Activated naive CD4-positive, alpha-beta T cell treated with anti-CD3 and anti-CD28 coated beads for 36 hours (primary cell): ENCODE measurements at regions of chr1 and their contacts with region 1.

Region 1: GRCh38 chr1:116377541-116378529 is 4.8 kb downstream of the ATP1A1 start:
- DNase-seq: peak; percentile 47
- H3K4me3 Mint-ChIP-seq: peak overlapping the region; percentile 72
- H3K27ac Mint-ChIP-seq: peak overlapping the region; percentile 95
- H3K4me1 Mint-ChIP-seq: peaks cover 64% of the 10 kb centered on the region
- H3K27me3 Mint-ChIP-seq: no peaks in the 10 kb centered on the region

Region 2: DNA sequence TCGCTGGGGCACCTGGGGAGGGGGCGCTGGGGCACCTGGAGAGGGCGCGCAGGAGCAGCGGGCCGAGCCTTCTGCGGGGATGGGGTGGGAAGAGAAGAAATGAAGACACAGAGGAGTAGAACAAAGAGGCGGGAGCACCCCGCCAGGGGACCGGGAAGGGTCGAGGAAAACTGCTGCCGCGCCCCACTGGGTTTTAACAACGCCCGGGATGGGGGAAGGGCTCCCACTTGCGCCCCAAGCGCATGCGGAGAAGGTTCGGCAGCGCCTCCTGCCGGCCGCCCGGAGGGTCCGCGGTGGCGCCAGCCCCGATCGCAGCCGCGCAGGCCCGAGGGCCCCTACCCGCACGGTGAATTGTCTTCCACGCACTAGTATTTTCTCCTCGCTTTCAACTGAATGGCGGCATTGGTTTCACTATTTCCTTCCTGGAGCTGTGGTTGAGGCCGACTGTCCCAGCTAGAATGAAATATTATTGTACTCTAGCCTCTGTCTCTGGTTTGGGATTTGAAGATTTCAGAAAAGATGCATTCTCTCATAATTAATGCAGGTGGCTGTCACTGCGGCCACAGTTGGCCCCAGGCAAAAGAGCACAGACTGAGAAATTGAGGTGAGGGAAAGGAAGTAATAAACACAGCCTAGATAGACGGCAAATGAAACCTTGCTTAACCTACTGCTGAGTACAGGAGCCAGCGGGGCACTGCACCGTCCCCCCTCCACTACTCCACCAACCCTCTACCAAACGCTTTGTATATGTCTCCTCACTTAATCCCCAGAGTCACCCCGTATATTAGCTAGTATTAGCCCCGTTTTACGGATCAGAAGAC is 209.3 kb before region 1 on chr1:
- CTCF ChIA-PET with region 1: no interaction called
- intact Hi-C with region 1: loop called (anchors 2 kb)
- DNase-seq: peak; percentile 88
- H3K4me3 Mint-ChIP-seq: peak overlapping the region; percentile 74
- H3K27ac Mint-ChIP-seq: no peak overlapping the region
- H3K4me1 Mint-ChIP-seq: peaks cover 8% of the 10 kb centered on the region
- H3K27me3 Mint-ChIP-seq: no peaks in the 10 kb centered on the region

Region 3: GRCh38 chr1:116418091-116418830 is 40.4 kb after region 1 on chr1:
- CTCF ChIA-PET with region 1: interaction called, 3 read pairs
- intact Hi-C with region 1: loop called (anchors 1 kb)
- DNase-seq: peak; percentile 88
- H3K4me3 Mint-ChIP-seq: peak overlapping the region; percentile 87
- H3K27ac Mint-ChIP-seq: peak overlapping the region; percentile 78
- H3K4me1 Mint-ChIP-seq: peaks cover 32% of the 10 kb centered on the region
- H3K27me3 Mint-ChIP-seq: no peaks in the 10 kb centered on the region

Region 4: GRCh38 chr1:116556289-116557006 is 178.6 kb after region 1 on chr1:
- CTCF ChIA-PET with region 1: no interaction called
- intact Hi-C with region 1: loop called (anchors 1 kb)
- DNase-seq: peak; percentile 82
- H3K4me3 Mint-ChIP-seq: no peak overlapping the region
- H3K27ac Mint-ChIP-seq: peak overlapping the region; percentile 78
- H3K4me1 Mint-ChIP-seq: peaks cover 56% of the 10 kb centered on the region
- H3K27me3 Mint-ChIP-seq: no peaks in the 10 kb centered on the region

Region 5: DNA sequence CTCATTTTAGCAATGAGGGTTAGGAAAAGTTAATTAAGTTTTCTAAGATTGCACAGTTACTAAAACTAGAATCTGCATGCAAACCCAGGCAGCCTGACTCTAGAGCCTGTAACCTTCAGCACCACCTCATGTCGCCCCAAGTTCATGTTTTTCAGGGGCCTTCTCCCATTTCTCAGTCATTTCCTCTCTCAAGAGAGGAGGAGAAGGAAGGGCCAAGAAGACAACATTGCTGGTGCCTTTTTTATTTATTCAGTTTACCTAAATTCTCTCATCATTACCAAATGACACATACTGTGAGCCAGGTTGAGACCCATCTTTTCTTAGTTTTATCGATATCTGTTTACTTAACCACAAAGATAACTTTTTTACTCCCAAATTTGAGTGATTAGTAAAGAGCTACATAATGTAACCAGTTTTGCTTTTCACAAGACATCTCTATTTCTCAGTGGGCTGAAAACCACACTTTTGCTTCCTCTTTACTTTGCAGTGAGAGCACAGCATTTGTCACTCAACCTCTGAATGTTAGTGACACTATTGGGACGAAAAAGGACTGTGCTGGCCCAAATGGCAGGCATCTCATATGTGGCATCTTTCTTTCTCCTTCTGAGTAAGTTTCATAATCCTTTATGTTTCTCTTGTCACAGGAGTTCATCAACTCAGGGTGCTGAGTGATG is 623.6 kb after region 1 on chr1 and contains the start of gene CD101:
- CTCF ChIA-PET with region 1: no interaction called
- intact Hi-C with region 1: loop called (anchors 2 kb)
- DNase-seq: peak; percentile 72
- H3K4me3 Mint-ChIP-seq: peak within 1 kb of the TSS; percentile 8
- H3K27ac Mint-ChIP-seq: peak within 1 kb of the TSS; percentile 82
- H3K4me1 Mint-ChIP-seq: peaks cover 59% of the 10 kb centered on the region
- H3K27me3 Mint-ChIP-seq: no peaks in the 10 kb centered on the region
- total RNA-seq, gene CD101: 0.83 to 1.1 TPM

Region 6: GRCh38 chr1:117654493-117655219 is 1276.8 kb after region 1 on chr1:
- CTCF ChIA-PET with region 1: no interaction called
- intact Hi-C with region 1: loop called (anchors 2 kb)
- DNase-seq: no peak
- H3K4me3 Mint-ChIP-seq: no peak overlapping the region
- H3K27ac Mint-ChIP-seq: no peak overlapping the region
- H3K4me1 Mint-ChIP-seq: peaks cover 72% of the 10 kb centered on the region
- H3K27me3 Mint-ChIP-seq: peaks cover 11% of the 10 kb centered on the region